Activated T-helper 2 cell treated with anti-CD3 and anti-CD28 coated beads, Interferon-gamma antibody, Interleukin-2, Interleukin-4, amounts not matched to agents 10 μg/mL and 5 μg/mL and 100 μg/mL, durations not matched to agents 14 hours and 24 hours and 36 hours (primary cell): ENCODE measurements at regions of chr1 and their contacts with region 1.

Region 1: DNA sequence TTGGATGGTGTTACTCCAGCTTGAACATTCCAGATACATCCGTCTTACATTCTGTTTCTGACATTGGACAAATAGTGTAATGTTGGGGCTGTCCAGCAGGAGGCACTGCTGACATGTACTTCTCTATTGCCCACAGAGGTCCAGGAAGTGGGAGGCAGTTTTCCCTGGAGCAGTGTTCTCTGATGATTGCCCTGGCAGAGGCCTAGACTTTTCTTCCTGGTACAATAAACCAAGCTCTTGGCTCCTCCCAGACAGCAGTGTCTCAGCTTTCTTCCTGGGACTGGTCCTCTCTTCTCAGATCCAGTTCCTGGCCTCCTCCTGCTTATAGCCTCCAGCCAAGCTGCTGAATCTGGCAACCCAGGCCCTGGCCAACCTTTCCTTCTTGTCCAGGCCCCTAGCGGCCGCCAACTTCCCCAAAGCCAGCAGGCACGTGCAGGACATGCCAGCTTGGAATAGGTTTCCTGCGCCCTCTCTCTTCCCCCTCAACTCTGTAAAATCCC is 14.9 kb upstream of the IFNLR1 start:
- DNase-seq: peak; percentile 36
- H3K4me3 Mint-ChIP-seq: no peak overlapping the region
- H3K27ac Mint-ChIP-seq: no peak overlapping the region
- H3K4me1 Mint-ChIP-seq: peaks cover 19% of the 10 kb centered on the region
- H3K27me3 Mint-ChIP-seq: peaks cover 8% of the 10 kb centered on the region

Region 2: GRCh38 chr1:24321697-24322469 is 119.9 kb after region 1 on chr1:
- intact Hi-C with region 1: loop called (anchors 5 kb)
- DNase-seq: peak; percentile 82
- H3K4me3 Mint-ChIP-seq: peak overlapping the region; percentile 67
- H3K27ac Mint-ChIP-seq: peak overlapping the region; percentile 43
- H3K4me1 Mint-ChIP-seq: peaks cover 26% of the 10 kb centered on the region
- H3K27me3 Mint-ChIP-seq: peaks cover 86% of the 10 kb centered on the region

Region 3: DNA sequence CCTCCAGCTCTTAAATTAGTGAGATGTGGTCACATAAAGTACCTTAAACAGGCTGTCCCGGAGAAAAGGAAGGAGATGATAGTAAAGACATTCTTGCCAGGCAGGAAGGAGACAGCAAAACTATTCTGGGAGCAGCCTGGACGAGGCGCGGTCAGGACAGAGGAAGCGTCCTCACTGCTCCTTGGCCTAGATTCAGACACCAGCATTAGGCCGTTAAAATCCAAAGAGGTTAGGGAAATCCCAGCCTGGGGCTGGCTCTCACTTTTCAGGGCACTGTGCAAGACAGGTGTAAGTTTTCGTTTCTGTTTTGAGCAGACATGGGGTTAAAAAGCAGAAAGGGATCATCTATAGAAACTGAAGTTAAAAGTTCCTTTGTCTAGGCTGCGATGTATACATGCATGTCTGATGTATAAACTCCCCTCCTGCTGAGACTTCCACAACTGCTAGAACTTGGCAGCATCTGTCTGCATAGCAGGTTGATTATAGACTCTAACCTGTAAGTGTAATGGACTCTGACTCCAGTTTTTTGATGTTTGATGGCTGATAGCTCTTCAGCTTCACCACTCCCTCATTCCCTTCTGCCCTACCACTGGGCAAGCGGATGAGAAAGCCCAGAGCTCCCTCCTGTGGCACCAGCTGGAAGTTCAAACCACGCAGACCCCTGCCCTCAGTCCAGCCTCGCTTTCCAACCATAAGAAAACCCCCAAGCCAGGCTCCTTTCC is 190.1 kb after region 1 on chr1:
- intact Hi-C with region 1: loop called (anchors 1 kb)
- DNase-seq: peak; percentile 51
- H3K4me3 Mint-ChIP-seq: no peak overlapping the region
- H3K27ac Mint-ChIP-seq: peak overlapping the region; percentile 60
- H3K4me1 Mint-ChIP-seq: peaks cover 15% of the 10 kb centered on the region
- H3K27me3 Mint-ChIP-seq: no peaks in the 10 kb centered on the region

Region 4: DNA sequence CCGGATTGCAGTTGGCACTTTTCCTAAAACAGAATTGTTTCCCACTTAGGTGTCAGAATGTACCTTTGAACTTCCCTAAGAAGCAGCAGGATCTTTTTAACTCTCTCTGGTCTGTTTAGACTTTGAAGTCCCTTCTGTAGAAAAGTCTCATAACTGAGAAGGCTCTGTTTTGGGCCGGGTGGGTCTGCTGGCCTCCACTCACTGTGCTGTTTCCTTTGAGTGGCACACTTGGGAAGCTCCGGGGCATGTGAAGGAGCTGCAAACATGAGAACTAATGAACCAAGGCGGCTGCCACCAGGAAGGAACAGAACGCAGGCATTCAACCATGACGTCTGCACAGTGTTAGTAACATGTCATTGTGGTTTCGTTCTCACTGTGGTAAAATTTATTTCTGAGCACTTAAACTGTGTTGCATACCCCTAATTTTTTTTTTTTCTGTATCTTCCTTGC is 334.4 kb after region 1 on chr1:
- intact Hi-C with region 1: loop called (anchors 10 kb)
- DNase-seq: peak; percentile 43
- H3K4me3 Mint-ChIP-seq: peak overlapping the region; percentile 76
- H3K27ac Mint-ChIP-seq: peak overlapping the region; percentile 98
- H3K4me1 Mint-ChIP-seq: peaks cover 64% of the 10 kb centered on the region
- H3K27me3 Mint-ChIP-seq: no peaks in the 10 kb centered on the region

Region 5: GRCh38 chr1:24635195-24635843 is 433.3 kb after region 1 on chr1:
- intact Hi-C with region 1: loop called (anchors 5 kb)
- DNase-seq: no peak
- H3K4me3 Mint-ChIP-seq: no peak overlapping the region
- H3K27ac Mint-ChIP-seq: no peak overlapping the region
- H3K4me1 Mint-ChIP-seq: peaks cover 7% of the 10 kb centered on the region
- H3K27me3 Mint-ChIP-seq: peaks cover 16% of the 10 kb centered on the region